ENCODE measurements at regions of chr11 and their contacts with region 1.

Region 1: GRCh38 chr11:124586238-124586860 is 16.6 kb downstream of the OR8A1 start:
- DNase-seq: peak in 13 of 14 experiments; percentile 5 to 59 (median 28)
- ATAC-seq: no peak
- H3K4me3 ChIP-seq: no peak overlapping the region
- H3K4me3 Mint-ChIP-seq: no peak overlapping the region
- H3K27ac ChIP-seq: no peak overlapping the region
- H3K27ac Mint-ChIP-seq: no peak overlapping the region
- H3K4me1 ChIP-seq: no peaks in the 10 kb centered on the region
- H3K4me1 Mint-ChIP-seq: no peaks in the 10 kb centered on the region
- H3K27me3 ChIP-seq: peaks cover 0 to 3% of the 10 kb centered on the region in 2 experiments
- H3K27me3 Mint-ChIP-seq: peaks cover 37% of the 10 kb centered on the region
- CTCF ChIP-seq: peak; percentile 73

Region 2: GRCh38 chr11:124070915-124071635 is 515.3 kb before region 1 on chr11:
- CTCF ChIA-PET with region 1: interaction called, 6 read pairs
- POLR2A ChIA-PET with region 1: no interaction called
- intact Hi-C with region 1: loop called in 1 of 2 experiments (anchors 5 kb)
- DNase-seq: peak; percentile 43 to 80 (median 54)
- ATAC-seq: peak; percentile 37
- H3K4me3 ChIP-seq: no peak overlapping the region
- H3K4me3 Mint-ChIP-seq: no peak overlapping the region
- H3K27ac ChIP-seq: no peak overlapping the region
- H3K27ac Mint-ChIP-seq: no peak overlapping the region
- H3K4me1 ChIP-seq: peaks cover 12% of the 10 kb centered on the region
- H3K4me1 Mint-ChIP-seq: peaks cover 7% of the 10 kb centered on the region
- H3K27me3 ChIP-seq: peaks cover 15 to 31% of the 10 kb centered on the region in 2 experiments
- H3K27me3 Mint-ChIP-seq: peaks cover 62% of the 10 kb centered on the region
- CTCF ChIP-seq: peak; percentile 88

Region 3: DNA sequence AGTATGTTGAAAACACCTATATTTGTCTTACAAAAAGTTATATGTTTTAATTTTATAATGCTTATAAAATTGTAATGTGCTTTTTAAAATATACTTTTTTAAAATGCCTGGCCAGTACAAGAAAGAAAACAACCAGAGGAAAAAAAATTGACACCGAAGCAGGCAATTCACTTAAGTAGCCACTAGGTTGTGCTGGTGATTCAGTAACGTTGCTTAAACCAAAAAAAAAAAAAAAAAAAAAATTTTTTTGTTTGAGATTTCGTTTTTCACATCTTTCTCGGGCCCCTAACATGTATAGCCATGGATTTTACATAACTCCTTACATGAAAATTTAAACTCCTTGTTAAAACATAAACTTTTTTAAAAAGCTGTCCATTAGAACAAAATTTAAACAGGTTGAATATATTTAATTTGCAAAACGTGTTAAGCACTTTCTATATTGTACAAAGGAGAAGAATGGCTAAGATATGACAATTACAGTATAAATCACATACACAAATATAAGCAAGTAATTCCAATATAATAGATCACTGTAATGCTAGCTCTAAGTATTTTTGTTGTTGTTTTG is 170.9 kb before region 1 on chr11:
- CTCF ChIA-PET with region 1: no interaction called
- POLR2A ChIA-PET with region 1: no interaction called
- intact Hi-C with region 1: loop called (anchors 2 kb)
- DNase-seq: peak in 3 of 14 experiments; percentile 13 to 49 (median 23)
- ATAC-seq: peak; percentile 32
- H3K4me3 ChIP-seq: no peak overlapping the region
- H3K4me3 Mint-ChIP-seq: no peak overlapping the region
- H3K27ac ChIP-seq: no peak overlapping the region
- H3K27ac Mint-ChIP-seq: no peak overlapping the region
- H3K4me1 ChIP-seq: no peaks in the 10 kb centered on the region
- H3K4me1 Mint-ChIP-seq: no peaks in the 10 kb centered on the region
- H3K27me3 ChIP-seq: peaks cover 0 to 17% of the 10 kb centered on the region in 2 experiments
- H3K27me3 Mint-ChIP-seq: peaks cover 33% of the 10 kb centered on the region
- CTCF ChIP-seq: peak; percentile 70

Region 4: DNA sequence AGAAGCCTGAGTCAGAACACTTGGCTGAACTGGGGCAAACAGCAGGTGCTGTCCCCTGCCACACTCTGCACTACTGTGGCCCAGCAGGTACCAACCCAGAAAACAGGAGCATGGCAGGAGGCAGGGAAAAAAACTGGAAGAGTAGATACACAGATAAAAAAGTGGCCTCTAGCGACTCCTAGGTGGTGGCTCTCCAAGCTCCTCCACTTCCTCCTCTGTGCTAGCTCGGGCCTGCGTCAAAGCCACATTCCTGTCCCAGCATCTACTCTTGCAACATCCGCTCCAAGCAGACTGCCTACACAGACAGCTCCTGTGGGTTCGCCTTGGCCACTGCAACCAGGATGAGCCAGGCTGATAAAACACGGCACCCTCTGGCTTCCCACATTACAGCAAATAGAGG is 49.8 kb before region 1 on chr11:
- CTCF ChIA-PET with region 1: no interaction called
- POLR2A ChIA-PET with region 1: no interaction called
- intact Hi-C with region 1: no loop called
- DNase-seq: peak in 1 of 14 experiments; percentile 9
- ATAC-seq: no peak
- H3K4me3 ChIP-seq: no peak overlapping the region
- H3K4me3 Mint-ChIP-seq: no peak overlapping the region
- H3K27ac ChIP-seq: no peak overlapping the region
- H3K27ac Mint-ChIP-seq: no peak overlapping the region
- H3K4me1 ChIP-seq: no peaks in the 10 kb centered on the region
- H3K4me1 Mint-ChIP-seq: no peaks in the 10 kb centered on the region
- H3K27me3 ChIP-seq: peaks cover 7% of the 10 kb centered on the region in 2 experiments
- H3K27me3 Mint-ChIP-seq: peaks cover 59% of the 10 kb centered on the region
- CTCF ChIP-seq: no peak